WTC11 (cell line): ENCODE measurements at regions of chr7 and their contacts with region 1.

Region 1: DNA sequence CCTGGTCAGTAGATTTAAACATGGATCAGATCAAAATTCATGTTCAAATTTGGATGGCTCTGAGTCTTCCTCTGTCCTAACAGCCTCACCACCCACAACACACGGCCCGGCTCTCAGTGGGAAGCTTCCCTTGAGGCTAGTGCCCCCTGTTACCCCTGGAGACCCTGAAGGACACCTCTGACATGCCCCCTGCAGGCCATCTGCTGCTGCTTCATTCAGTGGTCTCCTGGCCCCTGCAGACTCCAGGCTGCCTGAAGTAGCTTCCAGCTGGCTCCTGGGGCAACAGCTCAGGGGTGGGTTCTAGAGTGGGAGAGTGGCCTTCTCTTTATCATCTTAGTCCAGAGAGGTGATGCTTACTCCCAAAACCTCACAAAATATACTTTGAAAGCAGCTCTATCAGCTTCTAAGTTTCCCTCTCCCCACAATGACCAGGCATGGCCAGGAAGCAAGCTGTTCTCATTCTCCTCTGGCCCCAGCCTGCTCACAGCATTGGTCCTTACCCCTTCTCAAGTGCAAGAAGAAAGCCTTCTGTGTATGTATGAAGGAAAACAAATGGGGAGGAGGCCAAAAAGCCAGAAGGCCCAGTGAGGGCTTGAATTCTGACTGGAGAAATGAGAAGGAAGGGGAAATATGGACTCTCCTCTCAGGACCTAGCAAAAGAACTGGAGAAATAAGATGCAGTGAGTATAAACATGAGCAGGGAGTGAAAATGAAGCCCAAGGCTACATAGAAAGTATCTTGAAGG is 189.6 kb upstream of the INHBA start:
- DNase-seq: peak; percentile 65
- ATAC-seq: peak; percentile 97
- H3K4me3 Mint-ChIP-seq: no peak overlapping the region
- H3K27ac Mint-ChIP-seq: no peak overlapping the region
- H3K4me1 Mint-ChIP-seq: peaks cover 1% of the 10 kb centered on the region; the same call in 1 of the 2 replicates
- H3K27me3 Mint-ChIP-seq: no peaks in the 10 kb centered on the region
- CTCF ChIP-seq: peak; percentile 28; the same call in 1 of the 2 replicates

Region 2: DNA sequence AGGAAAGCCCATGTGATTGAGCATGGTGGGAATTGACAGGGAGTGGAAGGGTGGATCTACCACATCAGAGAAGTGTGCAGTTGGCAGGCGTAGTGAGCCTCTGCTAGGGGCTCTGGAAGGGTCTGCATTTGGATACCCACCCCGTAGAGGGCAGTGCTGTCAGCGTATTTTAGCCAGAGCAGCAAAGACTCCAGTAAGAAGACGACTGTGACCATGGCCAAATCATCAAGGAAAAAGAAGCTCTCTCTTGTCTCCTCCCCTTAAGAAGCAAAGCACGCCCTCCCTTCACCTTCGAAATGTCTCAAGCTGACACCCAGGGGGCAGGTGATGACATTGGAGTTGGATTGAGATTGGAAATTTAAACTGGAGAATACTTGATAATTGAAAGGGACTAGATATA is 120.8 kb before region 1 on chr7:
- CTCF ChIA-PET with region 1: interaction called, 23 read pairs
- POLR2A ChIA-PET with region 1: no interaction called
- DNase-seq: peak; percentile 47
- ATAC-seq: peak; percentile 99
- H3K4me3 Mint-ChIP-seq: no peak overlapping the region
- H3K27ac Mint-ChIP-seq: no peak overlapping the region
- H3K4me1 Mint-ChIP-seq: peaks cover 2% of the 10 kb centered on the region; the same call in 1 of the 2 replicates
- H3K27me3 Mint-ChIP-seq: no peaks in the 10 kb centered on the region; the same call in 1 of the 2 replicates
- CTCF ChIP-seq: 0 out of 2 replicates have a peak, but pooled peaks have one; percentile 26

Region 3: GRCh38 chr7:41814888-41815287 is 77.6 kb before region 1 on chr7:
- CTCF ChIA-PET with region 1: interaction called, 10 read pairs
- POLR2A ChIA-PET with region 1: no interaction called
- DNase-seq: no peak
- ATAC-seq: peak; percentile 53
- H3K4me3 Mint-ChIP-seq: no peak overlapping the region
- H3K27ac Mint-ChIP-seq: no peak overlapping the region
- H3K4me1 Mint-ChIP-seq: peaks cover 28% of the 10 kb centered on the region
- H3K27me3 Mint-ChIP-seq: no peaks in the 10 kb centered on the region; the same call in none of the 2 replicates
- CTCF ChIP-seq: no peak

Region 4: DNA sequence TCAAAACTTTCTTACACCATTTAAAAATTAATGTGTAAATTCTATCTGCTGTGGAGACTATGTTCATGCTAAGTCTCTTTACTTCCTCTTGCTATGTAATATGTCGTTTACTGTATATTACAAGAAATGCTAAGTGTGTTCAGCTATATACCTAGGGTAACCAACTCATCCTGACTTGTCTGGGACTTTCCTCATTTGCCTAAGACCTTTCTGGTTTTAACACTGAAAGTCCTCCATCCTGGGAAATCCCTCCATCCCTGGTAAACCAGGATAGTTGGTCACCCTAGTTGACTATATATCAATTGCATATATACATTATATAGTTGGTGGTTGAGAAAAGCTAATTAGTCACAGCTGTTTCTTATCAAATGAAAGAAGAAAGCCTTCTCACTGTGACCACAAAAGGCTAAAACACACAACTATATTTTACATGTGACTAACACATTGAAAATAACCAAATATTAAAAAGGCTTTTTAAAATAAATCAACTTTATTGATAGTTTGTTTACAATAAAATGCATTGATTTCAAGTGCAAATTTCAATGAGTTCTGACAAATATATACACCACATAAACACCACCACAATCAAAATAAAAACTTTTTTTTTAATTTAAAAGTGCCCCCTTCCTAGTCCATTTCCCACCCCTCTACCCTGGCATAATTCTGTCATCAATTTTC is 21.9 kb before region 1 on chr7:
- CTCF ChIA-PET with region 1: interaction called, 10 read pairs
- POLR2A ChIA-PET with region 1: no interaction called
- DNase-seq: no peak
- ATAC-seq: no peak
- H3K4me3 Mint-ChIP-seq: no peak overlapping the region
- H3K27ac Mint-ChIP-seq: no peak overlapping the region
- H3K4me1 Mint-ChIP-seq: peaks cover 11% of the 10 kb centered on the region
- H3K27me3 Mint-ChIP-seq: no peaks in the 10 kb centered on the region; the same call in 1 of the 2 replicates
- CTCF ChIP-seq: no peak

Region 5: GRCh38 chr7:41878309-41879295 is 13.9 kb before region 1 on chr7:
- CTCF ChIA-PET with region 1: interaction called, 20 read pairs
- POLR2A ChIA-PET with region 1: no interaction called
- DNase-seq: no peak
- ATAC-seq: no peak
- H3K4me3 Mint-ChIP-seq: no peak overlapping the region
- H3K27ac Mint-ChIP-seq: no peak overlapping the region
- H3K4me1 Mint-ChIP-seq: peaks cover 19% of the 10 kb centered on the region
- H3K27me3 Mint-ChIP-seq: peaks cover 3% of the 10 kb centered on the region; the same call in 1 of the 2 replicates
- CTCF ChIP-seq: no peak

Region 6: GRCh38 chr7:41996381-41997035 is 104.0 kb after region 1 on chr7:
- CTCF ChIA-PET with region 1: no interaction called
- POLR2A ChIA-PET with region 1: no interaction called
- DNase-seq: no peak
- ATAC-seq: no peak
- H3K4me3 Mint-ChIP-seq: no peak overlapping the region
- H3K27ac Mint-ChIP-seq: no peak overlapping the region
- H3K4me1 Mint-ChIP-seq: peaks cover 3% of the 10 kb centered on the region; the same call in 1 of the 2 replicates
- H3K27me3 Mint-ChIP-seq: no peaks in the 10 kb centered on the region
- CTCF ChIP-seq: no peak